ENCODE measurements at regions of chr15 and their contacts with region 1.

Region 1: DNA sequence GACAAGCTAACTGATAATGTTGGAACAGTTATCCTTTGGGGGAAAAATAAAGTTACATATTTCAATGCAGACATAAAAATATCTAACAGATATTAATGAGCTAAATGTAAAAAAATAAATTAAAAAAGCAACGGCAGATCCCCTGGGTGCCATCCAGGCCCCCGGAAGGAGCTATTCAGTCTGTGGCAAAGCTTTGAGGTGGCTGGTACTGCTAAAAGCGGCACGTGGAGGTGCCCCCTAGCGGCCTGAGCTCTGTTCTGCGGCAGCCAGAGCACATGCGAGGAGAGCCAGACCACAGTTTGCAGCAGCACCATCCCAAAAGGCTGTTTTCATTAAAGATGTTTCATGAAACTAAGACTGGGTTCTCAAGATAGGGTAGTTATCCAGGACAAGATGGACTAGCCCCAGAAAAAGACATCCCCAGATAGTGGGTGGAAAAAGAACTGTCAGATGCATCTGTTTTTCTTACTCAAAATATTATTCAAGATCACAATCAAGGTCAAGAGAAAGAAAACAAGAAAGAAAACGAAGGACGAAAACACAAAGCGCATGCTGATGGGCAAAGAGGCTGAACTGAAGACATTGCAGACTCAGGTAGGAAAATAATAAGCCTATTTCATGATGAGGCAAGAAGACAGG is 18.7 kb downstream of the AP3S2 start:
- DNase-seq: peak; percentile 92
- ATAC-seq: peak; percentile 100
- H3K4me3 Mint-ChIP-seq: no peak overlapping the region
- H3K27ac Mint-ChIP-seq: peak overlapping the region; percentile 59
- H3K4me1 Mint-ChIP-seq: peaks cover 5% of the 10 kb centered on the region
- H3K27me3 Mint-ChIP-seq: no peaks in the 10 kb centered on the region
- CTCF ChIP-seq: peak; percentile 94

Region 2: GRCh38 chr15:89740137-89740536 is 134.9 kb before region 1 on chr15:
- CTCF ChIA-PET with region 1: interaction called, 30 read pairs
- POLR2A ChIA-PET with region 1: no interaction called
- intact Hi-C with region 1: loop called (anchors 2 kb)
- DNase-seq: peak; percentile 68
- ATAC-seq: peak; percentile 95
- H3K4me3 Mint-ChIP-seq: no peak overlapping the region
- H3K27ac Mint-ChIP-seq: no peak overlapping the region
- H3K4me1 Mint-ChIP-seq: no peaks in the 10 kb centered on the region
- H3K27me3 Mint-ChIP-seq: no peaks in the 10 kb centered on the region
- CTCF ChIP-seq: peak; percentile 83

Region 3: DNA sequence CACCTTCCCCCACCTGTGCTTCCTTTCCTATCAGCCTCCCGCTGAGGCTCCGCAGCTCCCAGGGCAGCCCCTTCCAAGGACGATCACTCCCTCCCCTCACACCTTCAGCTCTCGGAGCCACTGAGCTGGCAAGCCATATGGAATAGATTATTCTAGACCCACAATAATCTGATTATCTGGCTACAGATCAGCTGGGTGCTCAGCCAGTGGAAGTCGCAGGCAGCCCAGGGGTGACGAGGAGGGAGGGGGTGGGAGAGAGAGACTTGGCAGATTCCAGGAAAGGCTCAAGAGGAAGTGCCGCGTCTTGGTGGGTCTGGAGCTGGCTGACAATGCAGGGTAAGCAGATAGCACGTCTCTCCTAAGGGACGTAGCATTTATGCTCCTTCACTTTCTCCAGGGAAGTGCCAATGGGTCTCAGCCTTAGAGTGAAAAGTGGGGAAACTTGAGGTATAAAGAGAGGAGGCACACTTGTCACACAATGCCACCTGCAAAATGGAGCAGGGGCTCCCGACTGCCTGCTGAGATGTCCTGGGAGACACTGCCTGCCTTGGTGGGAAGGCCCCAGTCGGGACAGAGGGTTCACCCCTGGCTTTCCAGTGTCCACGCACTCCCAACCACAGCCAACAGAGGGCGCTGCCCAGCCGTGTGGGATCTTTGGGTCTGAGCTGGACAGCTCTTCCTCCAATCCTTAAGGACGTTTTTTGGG is 114.6 kb before region 1 on chr15:
- CTCF ChIA-PET with region 1: interaction called, 70 read pairs
- POLR2A ChIA-PET with region 1: interaction called, 3 read pairs
- intact Hi-C with region 1: loop called (anchors 5 kb)
- DNase-seq: peak; percentile 83
- ATAC-seq: peak; percentile 98
- H3K4me3 Mint-ChIP-seq: no peak overlapping the region
- H3K27ac Mint-ChIP-seq: no peak overlapping the region
- H3K4me1 Mint-ChIP-seq: no peaks in the 10 kb centered on the region
- H3K27me3 Mint-ChIP-seq: peaks cover 6% of the 10 kb centered on the region
- CTCF ChIP-seq: peak; percentile 82

Region 4: DNA sequence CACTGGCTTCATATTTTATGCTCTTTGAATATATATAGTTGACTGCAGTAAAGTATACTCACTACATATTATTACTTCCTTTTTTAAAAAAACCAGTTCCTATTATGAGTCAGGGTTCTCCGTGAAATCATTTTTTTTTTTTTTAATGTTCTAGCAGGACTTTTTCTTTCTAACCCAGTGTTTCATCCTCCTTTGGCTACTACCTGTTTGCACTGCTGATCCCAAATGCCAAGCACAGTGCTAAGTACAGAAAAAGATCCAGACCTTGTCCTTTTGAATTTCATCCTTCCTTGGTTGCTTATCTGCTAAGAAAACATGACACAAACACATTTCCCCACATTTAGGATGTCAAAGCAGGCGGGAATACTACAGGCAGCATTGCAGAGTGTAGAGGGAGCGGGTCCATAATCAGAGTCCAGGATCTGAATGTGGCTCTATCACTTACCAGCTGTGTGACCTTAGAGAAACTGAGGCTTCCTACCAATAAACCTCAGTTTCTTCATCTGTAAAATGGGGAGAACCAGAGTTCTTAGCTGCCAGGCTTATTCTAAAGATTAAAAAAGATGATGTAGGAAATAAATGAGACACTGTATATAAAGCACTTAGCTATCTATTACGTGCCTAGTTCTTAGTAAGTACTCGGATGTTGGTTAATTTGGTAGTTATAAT is 23.2 kb before region 1 on chr15:
- CTCF ChIA-PET with region 1: interaction called, 15 read pairs
- POLR2A ChIA-PET with region 1: no interaction called
- intact Hi-C with region 1: loop called (anchors 5 kb)
- DNase-seq: no peak
- ATAC-seq: no peak
- H3K4me3 Mint-ChIP-seq: no peak overlapping the region
- H3K27ac Mint-ChIP-seq: no peak overlapping the region
- H3K4me1 Mint-ChIP-seq: peaks cover 5% of the 10 kb centered on the region
- H3K27me3 Mint-ChIP-seq: no peaks in the 10 kb centered on the region
- CTCF ChIP-seq: no peak

Region 5: DNA sequence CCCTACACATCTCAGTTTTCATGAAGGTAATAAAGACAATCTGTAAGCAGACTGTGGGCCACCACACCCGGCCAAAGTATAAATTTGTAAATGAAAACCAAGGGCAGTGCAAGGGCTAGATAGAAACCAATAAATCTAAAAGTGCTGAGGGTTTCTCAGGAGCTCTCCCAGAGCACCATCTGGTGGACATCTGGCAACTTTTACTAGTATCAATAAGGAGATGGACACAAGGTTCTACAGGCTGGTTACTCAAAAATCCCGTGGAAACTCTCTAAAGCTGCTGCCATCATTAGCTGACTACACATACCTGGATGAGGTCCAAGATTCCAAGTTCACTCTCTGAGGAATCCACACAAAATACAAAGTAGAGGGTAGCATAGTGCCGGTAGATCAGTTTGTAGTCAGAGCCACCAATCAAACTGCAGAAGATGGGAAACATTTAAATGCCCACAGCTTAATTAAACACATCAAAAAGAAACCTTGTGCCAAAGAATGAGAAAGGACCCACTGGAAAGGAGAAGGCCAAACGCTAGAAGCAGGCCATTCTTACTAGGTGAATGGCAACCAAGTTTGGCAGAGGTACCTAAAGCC is 13.3 kb after region 1 on chr15:
- CTCF ChIA-PET with region 1: interaction called, 61 read pairs
- POLR2A ChIA-PET with region 1: interaction called, 6 read pairs
- intact Hi-C with region 1: no loop called
- DNase-seq: no peak
- ATAC-seq: no peak
- H3K4me3 Mint-ChIP-seq: no peak overlapping the region
- H3K27ac Mint-ChIP-seq: no peak overlapping the region
- H3K4me1 Mint-ChIP-seq: peaks cover 17% of the 10 kb centered on the region
- H3K27me3 Mint-ChIP-seq: no peaks in the 10 kb centered on the region
- CTCF ChIP-seq: peak; percentile 15

Region 6: DNA sequence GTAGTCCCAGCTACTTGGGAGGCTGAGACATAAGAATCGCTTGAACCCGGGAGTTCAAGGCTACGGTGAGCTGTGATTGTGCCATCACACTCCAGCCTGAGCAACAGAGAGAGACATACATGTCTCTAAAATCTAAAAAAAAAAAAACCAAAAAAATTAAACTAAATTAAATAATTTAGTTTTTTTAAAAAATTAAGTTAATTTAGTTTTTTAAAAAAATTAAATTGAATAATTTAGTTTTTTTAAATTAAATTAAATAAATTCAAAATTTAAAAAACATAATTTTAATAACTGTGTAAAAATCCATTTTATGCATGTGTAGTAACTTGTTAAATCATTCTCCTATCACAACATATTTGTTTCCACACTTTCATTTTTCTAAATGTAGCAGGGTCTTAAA is 57.8 kb after region 1 on chr15:
- CTCF ChIA-PET with region 1: no interaction called
- POLR2A ChIA-PET with region 1: no interaction called
- intact Hi-C with region 1: no loop called
- DNase-seq: no peak
- ATAC-seq: no peak
- H3K4me3 Mint-ChIP-seq: no peak overlapping the region
- H3K27ac Mint-ChIP-seq: no peak overlapping the region
- H3K4me1 Mint-ChIP-seq: peaks cover 12% of the 10 kb centered on the region
- H3K27me3 Mint-ChIP-seq: peaks cover 4% of the 10 kb centered on the region
- CTCF ChIP-seq: no peak

Region 7: DNA sequence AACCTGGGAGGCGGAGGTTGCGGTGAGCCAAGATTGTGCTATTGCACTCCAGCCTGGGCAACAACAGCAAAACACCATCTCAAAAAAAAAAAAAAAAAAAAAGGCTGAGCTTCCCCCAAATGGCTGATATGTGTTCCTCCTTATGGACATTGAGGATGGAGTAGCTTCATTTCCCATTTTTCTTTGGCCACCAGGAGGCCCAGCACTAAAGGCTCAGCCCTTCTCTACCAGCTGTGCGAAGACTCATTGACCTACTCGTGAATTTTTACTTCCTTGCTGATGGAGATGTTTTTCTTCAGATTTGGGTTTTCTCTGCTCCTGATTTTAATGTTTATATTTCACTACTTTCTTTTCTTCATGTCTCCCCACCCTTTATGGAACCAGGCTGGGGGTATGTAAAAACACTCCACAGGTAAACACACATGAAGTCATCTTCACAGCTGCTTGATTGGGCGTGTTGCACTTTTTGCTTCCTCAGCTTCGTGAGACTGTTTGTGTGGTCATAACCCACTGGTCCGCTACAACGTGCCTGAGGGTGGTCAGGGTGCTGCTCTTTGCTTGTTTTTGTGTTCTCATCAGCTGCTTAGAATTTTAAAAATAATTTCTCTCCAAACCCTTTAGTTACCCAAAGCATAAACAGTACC is 339.6 kb after region 1 on chr15:
- CTCF ChIA-PET with region 1: no interaction called
- POLR2A ChIA-PET with region 1: no interaction called
- intact Hi-C with region 1: no loop called
- DNase-seq: no peak
- ATAC-seq: no peak
- H3K4me3 Mint-ChIP-seq: no peak overlapping the region
- H3K27ac Mint-ChIP-seq: no peak overlapping the region
- H3K4me1 Mint-ChIP-seq: peaks cover 17% of the 10 kb centered on the region
- H3K27me3 Mint-ChIP-seq: no peaks in the 10 kb centered on the region
- CTCF ChIP-seq: no peak